ENCODE measurements at regions of chr14 and their contacts with region 1.

Region 1: GRCh38 chr14:104563742-104564615 is 15.6 kb upstream of the C14orf180 start:
- DNase-seq: peak; percentile 50 to 77 (median 63)
- ATAC-seq: peak; percentile 60
- H3K4me3 ChIP-seq: no peak overlapping the region
- H3K4me3 Mint-ChIP-seq: peak overlapping the region in 3 of 10 donors; percentile 4 to 45 (median 41)
- H3K27ac ChIP-seq: no peak overlapping the region
- H3K27ac Mint-ChIP-seq: no peak overlapping the region
- H3K4me1 ChIP-seq: peaks cover 0 to 4% of the 10 kb centered on the region in 2 donors
- H3K4me1 Mint-ChIP-seq: peaks cover 0 to 5% (median 0%) of the 10 kb centered on the region in 7 donors
- H3K27me3 ChIP-seq: no peaks in the 10 kb centered on the region
- H3K27me3 Mint-ChIP-seq: peaks cover 0 to 26% (median 5%) of the 10 kb centered on the region in 5 donors

Region 2: DNA sequence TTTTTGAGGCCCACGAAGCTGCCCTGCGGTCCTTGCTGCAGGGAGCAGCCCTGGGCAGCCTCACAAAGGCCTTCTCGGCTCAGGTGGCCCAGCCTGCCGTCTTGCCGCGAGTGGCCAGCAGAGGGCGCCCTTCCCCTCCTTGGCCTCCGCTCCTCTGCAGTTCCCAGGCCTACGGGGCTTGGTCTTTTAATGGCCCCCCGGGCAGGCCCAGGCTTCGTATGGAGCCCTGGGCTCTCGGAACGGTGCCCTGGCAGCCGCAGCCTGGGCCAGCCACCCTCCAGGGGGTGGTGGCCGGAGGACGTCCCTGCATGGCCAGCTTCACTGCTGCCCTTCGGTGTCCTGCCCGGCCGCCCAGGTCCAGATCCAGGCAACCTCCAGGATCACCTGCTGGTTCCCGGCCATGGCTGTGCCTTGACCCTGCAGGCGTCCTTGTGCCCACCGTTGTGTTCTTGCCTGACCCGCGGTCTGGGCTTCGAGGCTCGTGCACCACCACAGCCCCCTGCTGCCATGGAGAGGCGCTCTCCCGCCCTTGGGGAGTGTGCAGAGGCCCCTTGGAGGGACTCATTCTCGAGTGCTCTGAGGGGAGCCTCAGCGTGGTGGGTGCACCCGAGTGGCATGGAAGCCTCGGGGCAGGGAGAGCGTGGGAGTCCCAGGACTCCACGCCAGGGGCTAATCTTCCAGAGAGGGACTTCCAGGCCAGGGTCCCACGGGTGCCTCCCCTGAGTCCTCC is 469.1 kb before region 1 on chr14:
- CTCF ChIA-PET with region 1: no interaction called
- POLR2A ChIA-PET with region 1: no interaction called
- intact Hi-C with region 1: loop called in 1 of 2 experiments (anchors 5 kb)
- DNase-seq: peak; percentile 48 to 82 (median 67)
- ATAC-seq: peak; percentile 62
- H3K4me3 ChIP-seq: no peak overlapping the region
- H3K4me3 Mint-ChIP-seq: no peak overlapping the region
- H3K27ac ChIP-seq: no peak overlapping the region
- H3K27ac Mint-ChIP-seq: no peak overlapping the region
- H3K4me1 ChIP-seq: peaks cover 0 to 7% of the 10 kb centered on the region in 2 donors
- H3K4me1 Mint-ChIP-seq: peaks cover 0 to 6% (median 3%) of the 10 kb centered on the region in 7 donors
- H3K27me3 ChIP-seq: no peaks in the 10 kb centered on the region
- H3K27me3 Mint-ChIP-seq: no peaks in the 10 kb centered on the region

Region 3: GRCh38 chr14:104137297-104138097 is 426.5 kb before region 1 on chr14:
- CTCF ChIA-PET with region 1: interaction called, 10 read pairs
- POLR2A ChIA-PET with region 1: no interaction called
- intact Hi-C with region 1: loop called in 1 of 2 experiments (anchors 1 kb)
- DNase-seq: peak; percentile 8 to 77 (median 48)
- ATAC-seq: peak; percentile 72
- H3K4me3 ChIP-seq: no peak overlapping the region
- H3K4me3 Mint-ChIP-seq: peak overlapping the region; percentile 25 to 81 (median 63)
- H3K27ac ChIP-seq: no peak overlapping the region
- H3K27ac Mint-ChIP-seq: no peak overlapping the region
- H3K4me1 ChIP-seq: no peaks in the 10 kb centered on the region
- H3K4me1 Mint-ChIP-seq: peaks cover 0 to 10% (median 5%) of the 10 kb centered on the region in 7 donors
- H3K27me3 ChIP-seq: peaks cover 0 to 12% of the 10 kb centered on the region in 2 donors
- H3K27me3 Mint-ChIP-seq: peaks cover 20 to 41% (median 29%) of the 10 kb centered on the region in 5 donors

Measured in naive thymus-derived CD4-positive, alpha-beta T cell (primary cell).